HCT116 (cell line): ENCODE measurements at regions of chr1 and their contacts with region 1.

Region 1: GRCh38 chr1:180533266-180533987 is 25.3 kb upstream of the OVAAL start:
- DNase-seq: peak; percentile 56
- ATAC-seq: peak; percentile 97
- H3K4me3 ChIP-seq: no peak overlapping the region
- H3K27ac ChIP-seq: no peak overlapping the region
- H3K4me1 ChIP-seq: 0 out of 4 replicates have a peak, but pooled peaks cover 0 to 3% of the 10 kb centered on the region in 2 experiments
- H3K27me3 ChIP-seq: no peaks in the 10 kb centered on the region
- CTCF ChIP-seq: peak; percentile 84 to 94 (median 91)
- POLR2A ChIP-seq: no peak
- RAD21 ChIP-seq: peak; percentile 94

Region 2: GRCh38 chr1:180462102-180462501 is 71.3 kb before region 1 on chr1:
- CTCF ChIA-PET with region 1: no interaction called
- POLR2A ChIA-PET with region 1: no interaction called
- RAD21 ChIA-PET with region 1: no interaction called
- intact Hi-C with region 1: no loop called
- DNase-seq: no peak
- ATAC-seq: no peak
- H3K4me3 ChIP-seq: no peak overlapping the region
- H3K27ac ChIP-seq: no peak overlapping the region
- H3K4me1 ChIP-seq: no peaks in the 10 kb centered on the region
- H3K27me3 ChIP-seq: no peaks in the 10 kb centered on the region
- CTCF ChIP-seq: no peak
- POLR2A ChIP-seq: no peak
- RAD21 ChIP-seq: no peak

Region 3: GRCh38 chr1:180631766-180632325 is 98.4 kb after region 1 on chr1 and contains the start of gene XPR1:
- CTCF ChIA-PET with region 1: no interaction called
- POLR2A ChIA-PET with region 1: no interaction called
- RAD21 ChIA-PET with region 1: no interaction called
- intact Hi-C with region 1: loop called (anchors 5 kb)
- DNase-seq: peak; percentile 97
- ATAC-seq: peak; percentile 98
- H3K4me3 ChIP-seq: peak within 1 kb of the TSS; percentile 67 to 74
- H3K27ac ChIP-seq: peak within 1 kb of the TSS; percentile 68
- H3K4me1 ChIP-seq: peaks cover 10 to 17% of the 10 kb centered on the region in 2 experiments; a peak in 3 of 4 replicates
- H3K27me3 ChIP-seq: no peaks in the 10 kb centered on the region
- CTCF ChIP-seq: peak in 2 of 3 experiments; percentile 10 to 21; a peak in 3 of 6 replicates
- POLR2A ChIP-seq: peak; percentile 66
- RAD21 ChIP-seq: no peak
- total RNA-seq, gene XPR1: 19.9 TPM

Region 4: DNA sequence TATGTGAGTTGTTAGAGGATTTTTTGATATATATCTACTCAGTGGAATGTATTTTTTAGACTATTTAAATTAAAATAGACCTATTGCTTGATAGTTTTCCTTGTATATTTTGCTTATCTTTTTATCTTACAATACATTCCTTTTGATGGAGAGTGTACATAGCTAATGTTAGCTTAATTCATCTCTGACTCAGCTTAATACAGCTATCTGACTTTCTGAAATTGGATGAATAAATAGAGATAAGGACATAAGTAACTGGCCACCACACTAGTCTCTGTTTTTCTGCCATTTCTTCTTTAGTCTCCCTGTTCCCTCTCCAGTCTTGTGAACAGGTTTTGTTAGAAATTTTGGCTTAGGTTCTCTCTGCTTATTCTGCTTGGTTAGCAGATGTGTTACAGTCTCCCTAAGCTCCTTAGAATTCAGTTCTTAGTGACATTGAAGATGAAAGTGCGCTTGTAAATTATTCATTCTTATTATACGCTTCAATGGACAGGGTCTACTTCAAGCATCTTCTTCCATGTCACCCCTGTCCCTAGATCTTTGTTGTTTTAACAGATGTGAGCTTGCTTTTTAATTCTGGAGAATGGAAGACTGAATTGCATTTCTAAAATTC is 158.0 kb after region 1 on chr1:
- CTCF ChIA-PET with region 1: no interaction called
- POLR2A ChIA-PET with region 1: no interaction called
- RAD21 ChIA-PET with region 1: no interaction called
- intact Hi-C with region 1: no loop called
- DNase-seq: no peak
- ATAC-seq: no peak
- H3K4me3 ChIP-seq: no peak overlapping the region
- H3K27ac ChIP-seq: no peak overlapping the region
- H3K4me1 ChIP-seq: no peaks in the 10 kb centered on the region
- H3K27me3 ChIP-seq: no peaks in the 10 kb centered on the region
- CTCF ChIP-seq: no peak
- POLR2A ChIP-seq: no peak
- RAD21 ChIP-seq: no peak

Region 5: DNA sequence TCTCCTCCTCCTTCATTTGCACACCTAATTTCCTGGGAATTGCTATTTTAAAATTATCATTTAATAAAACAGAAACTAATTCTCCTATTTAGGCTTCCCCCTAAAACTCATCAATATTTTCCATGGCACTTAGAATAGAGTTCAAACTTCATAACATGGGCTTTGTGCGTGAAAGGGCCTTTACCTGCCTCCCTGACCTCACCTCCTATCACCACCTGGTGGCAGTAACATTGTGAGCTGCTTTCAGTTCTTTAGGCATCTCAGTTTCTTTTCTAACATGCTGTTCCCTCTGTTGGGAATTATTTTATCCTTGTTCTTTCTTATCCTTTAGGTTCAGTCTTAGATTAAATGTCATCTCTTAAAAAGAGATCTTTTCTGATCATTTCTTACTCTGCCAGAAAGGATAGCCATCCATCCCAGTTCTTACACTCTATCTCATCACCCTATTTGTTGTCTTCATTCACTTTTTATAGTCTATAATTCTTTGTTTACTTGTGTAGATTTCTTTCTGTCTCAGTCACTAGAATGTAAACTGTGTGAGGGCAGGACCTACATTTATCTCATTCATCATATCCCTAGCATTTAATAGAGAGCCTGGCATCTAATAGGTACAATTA is 245.5 kb after region 1 on chr1:
- CTCF ChIA-PET with region 1: no interaction called
- POLR2A ChIA-PET with region 1: no interaction called
- RAD21 ChIA-PET with region 1: no interaction called
- intact Hi-C with region 1: loop called (anchors 5 kb)
- DNase-seq: peak; percentile 10
- ATAC-seq: peak; percentile 80
- H3K4me3 ChIP-seq: no peak overlapping the region
- H3K27ac ChIP-seq: no peak overlapping the region
- H3K4me1 ChIP-seq: no peaks in the 10 kb centered on the region
- H3K27me3 ChIP-seq: no peaks in the 10 kb centered on the region
- CTCF ChIP-seq: peak; percentile 44 to 73 (median 72)
- POLR2A ChIP-seq: no peak
- RAD21 ChIP-seq: peak; percentile 58